ENCODE measurements at regions of chr9 and their contacts with region 1.

Region 1: DNA sequence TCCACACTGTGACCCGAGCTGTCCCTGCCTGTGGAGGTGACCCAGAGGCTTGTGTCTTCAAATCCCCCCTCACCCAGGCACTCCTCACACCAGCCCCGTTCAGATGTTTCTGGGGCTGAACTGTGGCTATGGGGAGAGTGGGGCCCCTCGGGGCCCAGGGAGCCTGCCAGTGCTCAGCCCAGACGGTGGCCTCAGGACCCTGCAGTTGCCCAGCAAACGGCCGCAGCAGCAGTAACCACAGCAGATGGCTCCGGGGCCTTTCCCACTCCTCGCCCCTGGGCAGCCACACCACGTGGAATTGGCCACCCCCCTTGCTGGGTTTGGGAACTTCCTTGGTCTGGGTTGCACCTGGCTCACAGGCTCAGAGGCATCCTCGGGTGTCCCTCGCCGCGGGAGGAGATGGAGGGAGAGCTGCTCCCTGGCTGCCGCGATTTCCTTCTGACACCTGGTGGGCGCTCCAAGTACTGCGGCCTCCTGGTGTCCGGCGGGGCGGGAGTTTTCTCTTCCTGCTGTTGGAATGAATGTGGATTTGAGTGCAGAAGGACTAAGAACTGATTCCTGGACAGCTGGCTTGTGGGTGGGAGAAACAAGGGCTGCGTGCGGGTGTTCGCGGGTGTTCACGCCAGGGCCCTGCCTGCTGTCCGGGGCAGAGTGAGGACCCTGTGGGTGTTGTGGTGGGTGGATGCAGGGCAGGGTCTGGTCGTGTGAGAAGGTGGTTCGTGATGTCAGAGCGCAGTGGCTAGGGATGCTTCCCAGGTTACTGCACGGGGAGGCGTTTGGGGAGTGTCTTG is 97.5 kb downstream of the COL5A1 start:
- DNase-seq: peak; percentile 40 to 84 (median 69)
- H3K4me3 ChIP-seq: no peak overlapping the region
- H3K27ac ChIP-seq: no peak overlapping the region
- H3K4me1 ChIP-seq: no peaks in the 10 kb centered on the region
- H3K27me3 ChIP-seq: no peaks in the 10 kb centered on the region
- CTCF ChIP-seq: peak; percentile 77 to 90 (median 84)
- POLR2A ChIP-seq: no peak

Region 2: DNA sequence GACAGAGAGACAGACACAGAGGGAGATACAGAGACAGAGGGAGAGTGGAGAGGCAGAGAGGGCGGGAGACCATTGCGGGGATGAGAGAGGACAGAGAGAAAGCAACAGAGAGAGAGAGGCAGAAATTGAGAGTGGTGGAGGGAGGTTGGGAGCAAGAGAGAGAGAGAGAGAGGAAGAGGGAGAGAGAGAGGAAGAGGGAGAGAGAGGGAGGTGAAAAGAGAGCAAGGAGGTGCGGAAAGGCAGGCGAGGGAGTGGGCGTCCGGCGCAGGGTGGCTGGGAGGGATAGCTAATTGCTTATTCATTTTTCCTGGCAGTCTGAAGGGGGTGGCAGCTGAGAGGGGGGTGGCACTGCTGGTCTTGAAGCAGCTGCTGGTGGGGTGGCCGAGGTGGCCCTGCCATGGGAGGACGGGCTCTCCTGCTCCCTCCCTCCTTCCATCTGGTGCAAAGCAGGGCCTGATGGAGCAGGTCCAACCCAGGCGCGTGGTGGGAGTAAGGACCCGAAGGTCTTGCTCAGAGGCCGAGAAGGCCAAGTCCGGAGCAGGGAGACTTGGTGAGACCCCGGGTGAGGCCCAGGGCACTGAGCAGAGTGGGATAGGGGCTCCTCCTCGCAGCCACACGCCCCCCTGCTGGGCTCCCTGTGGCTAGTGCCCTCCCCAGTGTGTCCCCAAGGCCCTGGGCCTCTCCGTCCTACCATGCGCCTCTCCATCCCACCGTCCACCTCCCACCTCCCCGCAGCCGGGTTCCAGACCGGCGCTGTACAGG is 549.4 kb before region 1 on chr9:
- intact Hi-C with region 1: loop called in 1 of 2 experiments (anchors 10 kb)
- DNase-seq: peak in 4 of 7 donors; percentile 14 to 55 (median 20)
- H3K4me3 ChIP-seq: no peak overlapping the region
- H3K27ac ChIP-seq: peak overlapping the region in 2 of 5 donors; percentile 79 to 95
- H3K4me1 ChIP-seq: peaks cover 0 to 25% of the 10 kb centered on the region in 2 donors
- H3K27me3 ChIP-seq: no peaks in the 10 kb centered on the region
- CTCF ChIP-seq: no peak
- POLR2A ChIP-seq: no peak

Region 3: DNA sequence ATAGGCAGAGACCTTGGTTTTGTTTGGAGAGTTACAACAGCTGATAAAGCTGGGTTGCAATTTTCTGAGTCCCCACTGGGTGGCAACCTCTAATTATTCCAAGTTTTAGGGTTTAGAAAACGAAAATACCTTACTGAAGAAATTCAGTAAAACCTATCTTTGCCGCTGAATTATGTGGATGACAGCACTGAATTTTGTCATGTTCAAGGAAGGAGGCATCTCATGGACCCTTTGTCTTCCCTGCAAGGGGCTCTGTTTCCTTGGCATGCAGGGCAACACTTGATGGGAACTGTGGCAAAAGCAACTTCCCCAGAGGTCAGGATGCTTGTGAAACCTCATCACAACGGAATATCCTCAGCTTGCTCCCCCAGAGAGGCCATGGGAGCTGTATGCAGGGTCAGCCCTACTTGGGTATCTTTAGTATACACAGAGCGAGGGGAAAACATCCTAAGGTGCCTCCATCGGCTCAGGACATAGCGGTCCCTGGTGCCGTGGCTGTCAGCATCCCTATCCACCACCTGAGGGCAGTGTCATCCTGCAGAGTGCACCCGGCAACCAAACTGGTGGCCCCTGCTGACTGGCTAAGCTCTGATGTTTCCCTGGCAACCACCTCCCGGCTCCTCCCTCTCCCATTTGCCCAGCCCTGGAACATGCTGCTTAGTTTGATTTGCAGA is 289.7 kb before region 1 on chr9:
- intact Hi-C with region 1: loop called (anchors 2 to 5 kb)
- DNase-seq: peak; percentile 90 to 98 (median 96)
- H3K4me3 ChIP-seq: no peak overlapping the region
- H3K27ac ChIP-seq: no peak overlapping the region
- H3K4me1 ChIP-seq: no peaks in the 10 kb centered on the region
- H3K27me3 ChIP-seq: no peaks in the 10 kb centered on the region
- CTCF ChIP-seq: peak; percentile 74 to 97 (median 93)
- POLR2A ChIP-seq: no peak

Region 4: GRCh38 chr9:134455934-134456739 is 282.9 kb before region 1 on chr9:
- intact Hi-C with region 1: loop called in 1 of 2 experiments (anchors 5 kb)
- DNase-seq: peak; percentile 60 to 89 (median 71)
- H3K4me3 ChIP-seq: peak overlapping the region in 1 of 4 donors; percentile 8
- H3K27ac ChIP-seq: peak overlapping the region; percentile 13 to 91 (median 84)
- H3K4me1 ChIP-seq: peaks cover 0 to 11% of the 10 kb centered on the region in 2 donors
- H3K27me3 ChIP-seq: no peaks in the 10 kb centered on the region
- CTCF ChIP-seq: no peak
- POLR2A ChIP-seq: peak in 1 of 2 donors; percentile 17

Region 5: DNA sequence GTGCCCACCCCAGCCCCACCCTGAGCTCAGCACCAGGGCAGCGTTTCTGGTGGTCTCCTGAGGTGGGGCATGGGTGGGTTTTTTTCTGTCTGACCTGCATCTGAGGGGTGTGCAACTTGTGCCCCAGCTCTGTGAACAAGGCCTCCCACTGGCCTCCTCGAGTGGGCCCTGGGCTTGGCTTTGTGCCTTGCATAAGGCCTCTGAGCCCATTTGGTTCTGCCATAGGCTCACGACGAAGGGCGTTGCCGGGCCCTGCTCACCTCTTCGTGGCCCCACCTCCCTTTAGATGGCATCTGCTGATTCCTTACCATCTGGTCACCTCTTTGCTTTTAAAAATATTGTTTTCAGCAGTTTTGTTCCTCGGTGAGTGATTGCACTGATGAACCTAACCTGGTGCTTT is 224.6 kb before region 1 on chr9:
- intact Hi-C with region 1: no loop called
- DNase-seq: no peak
- H3K4me3 ChIP-seq: no peak overlapping the region
- H3K27ac ChIP-seq: no peak overlapping the region
- H3K4me1 ChIP-seq: no peaks in the 10 kb centered on the region
- H3K27me3 ChIP-seq: no peaks in the 10 kb centered on the region
- CTCF ChIP-seq: no peak
- POLR2A ChIP-seq: no peak

Region 6: DNA sequence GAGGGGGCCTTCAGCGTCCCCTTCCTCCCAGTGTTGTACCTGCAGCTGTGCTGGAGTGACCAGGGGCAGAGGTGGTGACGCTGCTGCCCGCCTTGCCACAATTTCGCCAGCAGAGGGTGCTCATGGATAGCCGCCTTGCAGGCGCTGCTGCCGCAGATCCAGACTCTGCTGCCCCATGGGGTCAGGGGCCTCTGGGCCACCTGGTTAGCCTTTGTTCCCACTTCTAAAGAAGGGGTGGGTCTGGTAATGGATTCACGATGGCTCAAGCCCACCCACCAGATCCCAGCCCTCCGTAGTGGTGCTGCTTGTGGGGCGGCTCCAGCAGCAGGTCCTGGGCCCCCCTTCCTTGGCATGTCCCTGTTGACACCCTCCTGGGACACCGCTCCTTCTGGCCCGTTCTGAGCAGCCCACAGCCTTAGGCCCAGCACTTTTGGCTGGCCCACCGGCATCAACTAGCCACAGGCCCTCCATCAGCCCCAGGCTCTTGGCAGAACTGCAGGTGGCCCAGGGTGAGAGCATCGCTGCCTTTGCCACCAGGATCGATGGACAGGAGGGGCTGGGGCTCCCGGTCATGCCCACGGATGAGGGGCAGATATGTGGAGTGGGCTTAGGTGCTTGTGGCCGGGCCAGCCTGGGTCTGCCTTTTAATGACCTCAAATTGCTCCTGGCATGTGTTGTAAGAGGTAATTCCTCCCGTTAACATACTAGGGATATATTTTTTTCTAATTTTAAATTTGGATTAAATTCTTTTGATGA is 40.3 kb before region 1 on chr9:
- intact Hi-C with region 1: loop called (anchors 5 kb)
- DNase-seq: peak; percentile 39 to 78 (median 68)
- H3K4me3 ChIP-seq: no peak overlapping the region
- H3K27ac ChIP-seq: no peak overlapping the region
- H3K4me1 ChIP-seq: no peaks in the 10 kb centered on the region
- H3K27me3 ChIP-seq: no peaks in the 10 kb centered on the region
- CTCF ChIP-seq: peak; percentile 84 to 90 (median 88)
- POLR2A ChIP-seq: no peak

Region 7: DNA sequence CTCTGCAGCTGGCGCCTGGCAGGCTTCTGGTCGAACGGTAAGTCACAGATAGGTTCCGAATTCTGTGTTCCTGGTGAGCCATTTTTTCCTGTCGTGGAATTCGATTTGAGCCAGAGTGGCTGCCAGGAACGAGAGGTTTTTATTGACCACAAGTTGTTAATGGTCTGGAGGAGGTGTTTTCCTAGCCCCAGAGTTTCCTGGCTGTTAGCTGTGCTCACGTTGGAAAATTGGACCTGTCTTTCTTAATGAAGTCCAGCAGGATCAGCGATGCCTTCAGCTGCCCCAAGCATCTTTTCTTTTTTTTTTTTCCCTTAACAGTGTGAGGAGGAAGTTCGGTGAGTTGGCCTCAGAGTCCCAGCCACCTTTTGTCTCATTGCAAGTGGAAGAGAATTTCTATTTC is 34.6 kb before region 1 on chr9:
- intact Hi-C with region 1: loop called (anchors 5 kb)
- DNase-seq: no peak
- H3K4me3 ChIP-seq: no peak overlapping the region
- H3K27ac ChIP-seq: no peak overlapping the region
- H3K4me1 ChIP-seq: peaks cover 0 to 12% of the 10 kb centered on the region in 2 donors
- H3K27me3 ChIP-seq: no peaks in the 10 kb centered on the region
- CTCF ChIP-seq: no peak
- POLR2A ChIP-seq: no peak

Region 8: GRCh38 chr9:134807716-134808444 is 68.8 kb after region 1 on chr9:
- intact Hi-C with region 1: no loop called
- DNase-seq: peak in 4 of 7 donors; percentile 23 to 71 (median 37)
- H3K4me3 ChIP-seq: no peak overlapping the region
- H3K27ac ChIP-seq: peak overlapping the region in 1 of 5 donors; percentile 68
- H3K4me1 ChIP-seq: no peaks in the 10 kb centered on the region
- H3K27me3 ChIP-seq: no peaks in the 10 kb centered on the region
- CTCF ChIP-seq: no peak
- POLR2A ChIP-seq: no peak

Region 9: DNA sequence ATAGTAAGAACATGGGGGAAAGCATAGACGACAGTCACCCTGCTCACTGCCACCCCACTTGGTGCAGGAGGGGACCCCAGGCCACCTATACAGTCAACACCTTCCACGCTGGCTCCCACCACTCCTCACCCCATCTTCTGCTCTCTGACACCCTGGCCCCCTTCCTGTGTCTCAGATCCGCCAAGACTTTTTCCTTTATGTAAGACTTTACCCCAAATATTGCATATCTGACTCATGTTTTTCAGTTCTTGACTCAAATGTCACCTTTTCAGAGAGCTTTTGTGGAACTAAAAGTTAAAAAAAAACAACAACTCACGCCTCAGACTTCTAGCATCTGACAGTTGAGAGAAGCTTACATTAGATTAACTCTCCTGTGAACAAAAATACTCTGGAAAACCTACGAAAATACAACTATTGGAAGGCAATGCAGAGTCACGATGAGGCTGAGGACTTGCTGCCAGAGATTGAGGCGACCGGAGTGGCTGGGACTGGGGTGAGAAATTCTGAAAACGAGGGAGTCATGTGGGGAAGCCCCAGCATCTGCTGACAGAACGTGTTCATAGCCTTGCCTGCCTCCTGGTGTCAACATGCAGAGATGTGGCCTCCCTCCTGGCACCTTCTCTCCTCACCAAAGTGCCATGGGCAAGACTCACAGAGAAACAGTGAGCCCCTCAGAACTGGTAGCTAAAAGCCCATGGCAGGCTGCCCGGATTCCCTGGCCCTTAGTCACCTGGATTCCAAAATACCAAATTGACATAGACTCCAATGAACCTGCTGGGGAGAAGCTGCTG is 119.2 kb after region 1 on chr9:
- intact Hi-C with region 1: no loop called
- DNase-seq: peak; percentile 47 to 86 (median 75)
- H3K4me3 ChIP-seq: no peak overlapping the region
- H3K27ac ChIP-seq: peak overlapping the region in 2 of 5 donors; percentile 37 to 47
- H3K4me1 ChIP-seq: peaks cover 7 to 27% of the 10 kb centered on the region in 2 donors
- H3K27me3 ChIP-seq: no peaks in the 10 kb centered on the region
- CTCF ChIP-seq: peak in 2 of 6 experiments; percentile 11 to 39
- POLR2A ChIP-seq: peak in 1 of 2 donors; percentile 5